ENCODE measurements at regions of chr6 and their contacts with region 1.

Region 1: GRCh38 chr6:16964553-16965501 is 137.0 kb upstream of the STMND1 start:
- DNase-seq: peak; percentile 63 to 92
- H3K4me3 ChIP-seq: no peak overlapping the region
- CTCF ChIP-seq: peak in 1 of 3 donors; percentile 41
- POLR2A ChIP-seq: no peak

Region 2: GRCh38 chr6:16769131-16769985 is 195.5 kb before region 1 on chr6:
- intact Hi-C with region 1: loop called (anchors 5 kb)
- DNase-seq: peak; percentile 60 to 70
- H3K4me3 ChIP-seq: no peak overlapping the region
- CTCF ChIP-seq: no peak
- POLR2A ChIP-seq: no peak

Region 3: GRCh38 chr6:17130786-17131185 is 166.0 kb after region 1 on chr6:
- intact Hi-C with region 1: no loop called
- DNase-seq: no peak
- H3K4me3 ChIP-seq: no peak overlapping the region
- CTCF ChIP-seq: no peak
- POLR2A ChIP-seq: no peak

Measured in lower leg skin (tissue), 4 donors.